ENCODE measurements at regions of chr3 and their contacts with region 1.

Region 1: DNA sequence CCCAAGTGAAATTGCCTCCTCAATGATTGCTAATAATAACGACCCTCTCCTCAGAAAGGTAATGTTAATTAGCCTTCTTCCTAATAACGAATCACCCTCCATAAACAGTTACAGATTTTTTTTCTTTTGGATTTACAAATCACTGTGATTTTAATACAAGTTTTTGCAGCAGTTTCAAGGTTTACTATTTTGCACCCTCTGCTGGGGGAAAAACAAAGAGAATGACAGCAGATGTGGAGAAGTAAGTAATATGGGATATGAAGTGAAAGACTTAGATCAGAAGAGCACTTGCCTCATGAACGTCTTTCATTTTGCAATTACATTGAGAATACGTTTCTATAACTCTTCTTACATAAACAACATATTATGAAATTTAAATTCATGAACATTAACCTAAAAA is 16.1 kb upstream of the CNTN3 start:
- DNase-seq: no peak
- ATAC-seq: no peak
- H3K4me3 ChIP-seq: no peak overlapping the region
- H3K27ac ChIP-seq: no peak overlapping the region
- H3K4me1 ChIP-seq: no peaks in the 10 kb centered on the region
- H3K27me3 ChIP-seq: no peaks in the 10 kb centered on the region
- CTCF ChIP-seq: peak in 5 of 9 donors; percentile 6 to 38 (median 30)

Region 2: GRCh38 chr3:74267588-74268184 is 362.9 kb before region 1 on chr3:
- intact Hi-C with region 1: loop called in 1 of 10 experiments (anchors 10 kb)
- DNase-seq: peak in 1 of 2 donors; percentile 15
- ATAC-seq: peak in 1 of 8 donors; percentile 23
- H3K4me3 ChIP-seq: no peak overlapping the region
- H3K27ac ChIP-seq: no peak overlapping the region
- H3K4me1 ChIP-seq: no peaks in the 10 kb centered on the region
- H3K27me3 ChIP-seq: no peaks in the 10 kb centered on the region
- CTCF ChIP-seq: peak; percentile 56 to 81 (median 72)

Region 3: DNA sequence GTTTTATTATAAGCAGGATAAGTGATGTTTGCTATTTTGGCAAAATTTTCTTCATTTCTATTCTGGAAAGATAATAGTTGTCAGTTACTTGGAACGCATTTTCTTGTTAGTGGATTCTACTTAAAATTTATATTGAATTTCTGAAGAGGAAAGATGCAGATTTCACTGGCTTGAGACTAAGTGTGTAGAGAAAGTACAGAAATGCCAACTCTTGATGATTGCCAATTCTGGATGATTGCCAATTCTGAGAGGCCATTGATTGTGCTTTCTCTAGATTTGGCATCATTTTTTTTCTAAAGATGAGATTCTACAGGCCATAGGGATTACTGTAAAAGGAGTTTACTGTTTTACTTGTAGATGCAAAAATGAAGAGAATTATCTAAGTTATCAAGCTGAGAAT is 42.7 kb after region 1 on chr3:
- intact Hi-C with region 1: no loop called
- DNase-seq: no peak
- ATAC-seq: no peak
- H3K4me3 ChIP-seq: no peak overlapping the region
- H3K27ac ChIP-seq: no peak overlapping the region
- H3K4me1 ChIP-seq: no peaks in the 10 kb centered on the region
- H3K27me3 ChIP-seq: no peaks in the 10 kb centered on the region
- CTCF ChIP-seq: no peak

Measured in heart right ventricle (tissue), 16 donors.